ENCODE measurements at regions of chr4 and their contacts with region 1.

Region 1: GRCh38 chr4:140004549-140004895 is 149.5 kb downstream of the MAML3 start:
- DNase-seq: no peak
- H3K4me3 ChIP-seq: no peak overlapping the region
- H3K4me3 Mint-ChIP-seq: peak overlapping the region; percentile 44 to 56
- H3K27ac ChIP-seq: no peak overlapping the region
- H3K27ac Mint-ChIP-seq: peak overlapping the region in 1 of 7 donors; percentile 40
- H3K4me1 ChIP-seq: peaks cover 0 to 5% of the 10 kb centered on the region in 2 donors
- H3K4me1 Mint-ChIP-seq: peaks cover 22% of the 10 kb centered on the region
- H3K27me3 ChIP-seq: no peaks in the 10 kb centered on the region
- H3K27me3 Mint-ChIP-seq: peaks cover 0 to 4% (median 2%) of the 10 kb centered on the region in 3 donors
- CTCF ChIP-seq: no peak

Region 2: DNA sequence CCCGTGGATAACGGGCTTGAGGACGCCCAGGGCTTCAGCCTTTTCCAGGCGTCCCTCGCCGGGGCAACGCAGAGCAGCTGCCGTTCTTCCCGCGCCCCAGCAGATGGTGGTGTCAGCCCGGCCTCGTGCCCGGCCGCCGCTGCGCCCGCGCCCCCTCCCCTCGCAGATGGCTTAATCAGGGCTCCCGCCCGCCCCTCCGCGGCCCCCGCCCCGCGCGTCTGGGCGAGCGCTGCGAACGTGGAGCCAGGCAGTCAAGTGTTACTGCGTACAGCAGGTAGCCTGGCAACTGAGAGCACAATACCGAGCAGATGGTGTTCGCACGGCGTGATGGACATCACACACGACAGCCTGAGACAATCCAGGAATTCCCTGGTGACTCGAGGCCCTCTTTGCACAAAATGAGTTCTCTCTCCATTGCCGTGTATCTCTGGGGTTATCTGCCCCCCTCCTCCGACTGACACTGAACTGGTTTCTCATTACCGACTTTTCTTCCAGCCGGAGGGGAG is 269.6 kb before region 1 on chr4:
- intact Hi-C with region 1: loop called in 1 of 2 experiments (anchors 10 kb)
- DNase-seq: peak; percentile 74 to 97 (median 78)
- H3K4me3 ChIP-seq: peak overlapping the region; percentile 53 to 81 (median 73)
- H3K4me3 Mint-ChIP-seq: peak overlapping the region; percentile 85 to 92
- H3K27ac ChIP-seq: peak overlapping the region; percentile 34 to 79
- H3K27ac Mint-ChIP-seq: peak overlapping the region; percentile 48 to 94 (median 90)
- H3K4me1 ChIP-seq: peaks cover 40 to 57% of the 10 kb centered on the region in 2 donors
- H3K4me1 Mint-ChIP-seq: peaks cover 51% of the 10 kb centered on the region
- H3K27me3 ChIP-seq: no peaks in the 10 kb centered on the region
- H3K27me3 Mint-ChIP-seq: peaks cover 0 to 1% (median 1%) of the 10 kb centered on the region in 3 donors
- CTCF ChIP-seq: peak; percentile 95

Measured in CD14-positive monocyte (primary cell).